ENCODE measurements at regions of chr17 and their contacts with region 1.

Region 1: DNA sequence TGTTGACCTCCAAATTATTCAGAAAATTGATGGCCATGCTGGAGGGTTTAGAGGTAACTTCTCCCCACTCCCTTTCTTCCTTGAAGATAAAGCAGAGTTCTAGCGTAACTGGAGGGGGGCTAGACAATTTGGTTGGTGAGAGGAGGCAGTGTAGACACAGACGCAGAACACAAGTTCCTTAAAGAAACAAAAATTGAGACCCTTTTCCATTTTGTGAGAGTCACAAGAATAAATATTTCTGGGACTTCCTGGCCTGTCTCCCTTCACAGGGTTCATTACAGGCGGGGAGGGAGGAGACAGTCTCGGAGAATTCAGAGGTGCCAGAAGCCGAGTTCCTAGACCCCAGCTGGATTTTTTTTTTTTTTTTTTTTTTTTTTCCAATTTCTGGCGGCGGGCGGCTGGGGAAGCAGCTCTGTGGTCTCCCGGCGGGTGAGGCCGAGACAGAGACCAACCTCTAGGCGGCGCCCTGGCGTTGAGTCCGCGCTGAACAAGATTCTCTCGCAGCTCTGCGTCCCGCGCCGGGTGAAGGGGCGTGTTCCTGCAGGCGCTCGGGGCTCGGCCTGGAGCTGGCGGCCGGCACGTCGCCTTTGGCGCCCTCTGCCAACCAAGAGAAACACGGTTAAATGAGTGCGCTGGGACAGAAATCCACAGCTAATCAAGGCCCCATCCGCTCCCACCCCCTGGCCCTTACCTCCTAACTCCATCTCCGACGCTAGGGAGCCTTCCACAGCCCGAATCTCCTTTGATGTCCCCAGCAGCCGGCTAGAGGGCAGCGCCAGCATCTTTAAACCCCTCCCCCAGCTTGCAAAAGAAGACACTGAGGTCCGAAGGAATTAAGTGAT is 10.2 kb upstream of the HOXB9 start:
- DNase-seq: no peak
- H3K4me3 ChIP-seq: no peak overlapping the region
- H3K27ac ChIP-seq: no peak overlapping the region
- H3K4me1 ChIP-seq: peaks cover 5 to 22% (median 13%) of the 10 kb centered on the region in 4 donors
- H3K27me3 ChIP-seq: peaks cover 0 to 100% (median 85%) of the 10 kb centered on the region in 4 donors
- CTCF ChIP-seq: peak in 2 of 3 experiments; percentile 15 to 45
- EP300 ChIP-seq: no peak
- POLR2A ChIP-seq: no peak

Region 2: GRCh38 chr17:48441231-48441711 is 195.1 kb before region 1 on chr17:
- intact Hi-C with region 1: no loop called
- DNase-seq: no peak
- H3K4me3 ChIP-seq: no peak overlapping the region
- H3K27ac ChIP-seq: no peak overlapping the region
- H3K4me1 ChIP-seq: no peaks in the 10 kb centered on the region
- H3K27me3 ChIP-seq: peaks cover 0 to 18% (median 0%) of the 10 kb centered on the region in 4 donors
- CTCF ChIP-seq: no peak
- EP300 ChIP-seq: no peak
- POLR2A ChIP-seq: no peak

Region 3: GRCh38 chr17:48510761-48511604 is 125.4 kb before region 1 on chr17:
- intact Hi-C with region 1: no loop called
- DNase-seq: no peak
- H3K4me3 ChIP-seq: no peak overlapping the region
- H3K27ac ChIP-seq: no peak overlapping the region
- H3K4me1 ChIP-seq: peaks cover 0 to 4% (median 1%) of the 10 kb centered on the region in 4 donors
- H3K27me3 ChIP-seq: no peaks in the 10 kb centered on the region
- CTCF ChIP-seq: no peak
- EP300 ChIP-seq: no peak
- POLR2A ChIP-seq: no peak

Region 4: DNA sequence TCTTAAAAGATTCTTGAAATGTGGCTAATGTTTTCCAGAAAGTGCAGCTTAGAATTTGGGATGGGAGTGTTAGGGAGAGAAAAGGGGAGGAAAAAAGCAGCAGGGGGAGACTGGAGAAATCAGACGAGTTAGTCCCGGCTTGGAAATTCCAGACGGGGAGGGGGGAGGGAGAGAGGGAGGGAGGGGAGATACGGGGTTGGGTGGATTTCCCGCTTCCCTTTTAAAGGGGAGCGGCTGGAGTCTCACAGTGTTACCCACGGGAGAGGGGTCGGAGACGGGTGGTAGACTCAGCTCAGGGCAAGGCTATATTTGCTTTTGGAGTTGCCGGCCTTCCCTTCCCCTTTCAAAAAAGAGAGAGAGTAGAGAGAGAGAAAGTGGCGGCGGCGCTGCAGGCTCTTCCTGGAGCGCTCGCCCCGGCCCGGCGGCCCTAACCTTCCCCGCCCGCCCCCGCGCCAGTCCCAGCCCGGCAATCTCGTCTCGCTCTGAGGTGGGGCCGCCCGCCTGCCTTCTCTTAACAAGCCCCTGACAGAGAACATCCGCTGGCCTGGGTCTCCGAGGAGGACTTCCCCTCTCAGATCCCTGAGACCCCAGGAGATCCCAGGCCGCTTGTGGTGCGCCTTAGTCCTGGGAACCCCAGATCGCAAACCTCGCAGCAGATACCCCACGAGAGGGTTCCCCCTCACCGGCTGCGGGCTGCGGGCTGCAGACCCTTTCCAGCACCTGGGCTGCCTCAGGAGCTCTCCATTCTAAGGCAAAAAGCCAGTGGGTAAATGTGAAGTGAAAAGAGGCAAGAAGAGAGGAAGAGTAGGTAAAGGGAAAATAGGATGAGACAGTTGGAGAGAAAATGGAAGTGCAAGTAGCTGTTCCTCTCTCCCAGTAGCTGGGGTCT is 367.5 kb after region 1 on chr17:
- intact Hi-C with region 1: loop called (anchors 10 kb)
- DNase-seq: peak; percentile 85
- H3K4me3 ChIP-seq: no peak overlapping the region
- H3K27ac ChIP-seq: no peak overlapping the region
- H3K4me1 ChIP-seq: peaks cover 0 to 6% (median 0%) of the 10 kb centered on the region in 4 donors
- H3K27me3 ChIP-seq: peaks cover 0 to 99% (median 56%) of the 10 kb centered on the region in 4 donors
- CTCF ChIP-seq: no peak
- EP300 ChIP-seq: no peak
- POLR2A ChIP-seq: no peak